H1 (cell line): ENCODE measurements at regions of chr17 and their contacts with region 1.

Region 1: DNA sequence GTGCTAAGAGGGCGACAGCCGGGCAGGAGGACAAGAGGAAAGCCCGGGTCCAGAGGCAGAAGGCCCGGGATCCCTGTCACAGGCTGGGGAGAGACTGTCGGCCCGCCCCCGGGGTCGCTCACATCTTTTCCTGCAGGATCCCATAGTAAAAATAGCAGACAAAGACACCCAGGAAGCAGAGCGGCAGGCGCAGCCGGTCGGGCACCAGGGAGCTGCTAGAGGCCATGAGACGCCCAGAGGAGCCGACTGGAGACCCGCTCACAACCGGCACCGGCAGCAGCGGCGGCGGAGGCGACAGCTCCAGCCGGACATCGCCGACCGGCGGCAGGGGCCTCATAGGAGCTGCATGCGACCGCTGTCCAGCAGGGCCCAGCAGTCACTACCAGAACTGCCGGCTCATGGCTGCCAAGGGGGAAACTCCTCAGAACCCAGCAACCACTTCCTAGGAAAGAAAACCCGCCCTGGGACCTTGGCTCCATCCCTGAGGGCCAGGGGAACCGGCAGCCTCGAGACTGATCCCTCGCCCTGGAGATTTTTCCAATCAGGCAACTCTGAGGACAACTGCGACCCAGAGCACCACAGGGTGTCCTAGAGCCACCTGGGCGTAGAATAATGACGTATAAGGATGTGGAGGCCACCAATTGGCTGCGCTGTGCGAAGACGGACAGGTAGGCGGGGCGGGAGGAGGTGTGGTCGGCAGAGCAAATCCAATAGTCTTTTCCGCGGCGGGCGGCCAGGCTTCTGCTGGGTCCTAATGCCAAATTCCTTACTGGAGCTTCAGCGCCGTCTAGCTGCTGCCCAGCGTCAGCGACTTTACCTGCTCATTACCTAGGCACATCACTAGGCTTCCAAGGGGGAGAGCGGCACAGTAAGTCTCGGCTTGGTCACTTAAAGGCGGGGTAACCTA is at the start of gene SLC35B1:
- DNase-seq: peak; percentile 94 to 97
- H3K4me3 ChIP-seq: peak within 1 kb of the TSS; percentile 76 to 97 (median 90)
- H3K27ac ChIP-seq: peak within 1 kb of the TSS; percentile 100
- H3K4me1 ChIP-seq: peaks cover 2 to 3% (median 3%) of the 10 kb centered on the region in 4 experiments; a peak in 6 of 7 replicates
- H3K27me3 ChIP-seq: no peaks in the 10 kb centered on the region
- CTCF ChIP-seq: peak; percentile 90 to 95 (median 91)
- EP300 ChIP-seq: 0 out of 3 replicates have a peak, but pooled peaks of 1 of the 2 experiments have one; percentile 26
- POLR2A ChIP-seq: peak; percentile 79 to 88
- RAD21 ChIP-seq: peak; percentile 52 to 68
- total RNA-seq, gene SLC35B1: 56.5 and 60.0 TPM in 2 replicates

Region 2: GRCh38 chr17:49508061-49508865 is 199.6 kb before region 1 on chr17:
- CTCF ChIA-PET with region 1: no interaction called
- POLR2A ChIA-PET with region 1: no interaction called
- DNase-seq: peak; percentile 83 to 97
- H3K4me3 ChIP-seq: peak overlapping the region; percentile 22 to 51 (median 34); a peak in 5 of 8 replicates
- H3K27ac ChIP-seq: peak overlapping the region; percentile 58; the same call in 1 of the 2 replicates
- H3K4me1 ChIP-seq: peaks cover 6 to 40% (median 22%) of the 10 kb centered on the region in 4 experiments
- H3K27me3 ChIP-seq: peaks cover 0 to 2% (median 0%) of the 10 kb centered on the region in 4 experiments; a peak in 1 of 7 replicates
- CTCF ChIP-seq: no peak
- EP300 ChIP-seq: no peak
- POLR2A ChIP-seq: peak in 1 of 2 experiments; percentile 48; a peak in 1 of 3 replicates
- RAD21 ChIP-seq: no peak

Region 3: GRCh38 chr17:49567871-49568694 is 139.8 kb before region 1 on chr17:
- CTCF ChIA-PET with region 1: interaction called, 310 read pairs
- POLR2A ChIA-PET with region 1: interaction called, 4 read pairs
- DNase-seq: peak in 1 of 2 experiments; percentile 96
- H3K4me3 ChIP-seq: peak overlapping the region in 2 of 4 experiments; percentile 11 to 51; a peak in 4 of 8 replicates
- H3K27ac ChIP-seq: no peak overlapping the region
- H3K4me1 ChIP-seq: peaks cover 0 to 9% (median 2%) of the 10 kb centered on the region in 4 experiments; a peak in 3 of 7 replicates
- H3K27me3 ChIP-seq: peaks cover 0 to 5% (median 2%) of the 10 kb centered on the region in 4 experiments; a peak in 4 of 7 replicates
- CTCF ChIP-seq: peak; percentile 87 to 98 (median 90)
- EP300 ChIP-seq: no peak
- POLR2A ChIP-seq: no peak
- RAD21 ChIP-seq: peak; percentile 97 to 99

Region 4: DNA sequence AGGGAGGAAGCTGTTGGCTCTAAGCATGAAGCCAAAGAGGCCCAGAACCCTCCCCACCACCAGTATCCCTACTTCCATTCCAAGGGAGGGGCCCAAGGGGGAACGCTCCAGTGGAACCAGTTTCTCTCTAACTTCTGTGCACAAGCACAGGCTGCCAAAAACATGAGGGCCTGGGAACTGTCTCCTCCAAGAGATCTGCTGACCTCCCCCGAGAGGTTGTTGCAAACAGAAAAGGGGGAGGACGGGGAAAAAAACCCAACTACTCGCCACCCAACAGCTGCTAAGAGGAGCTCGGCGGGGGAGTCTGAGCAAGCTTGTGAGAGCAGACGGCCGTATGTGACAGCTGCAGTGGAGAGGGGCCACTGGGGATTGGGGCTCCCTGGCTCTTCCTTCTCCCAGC is 15.6 kb after region 1 on chr17:
- CTCF ChIA-PET with region 1: interaction called, 41 read pairs
- POLR2A ChIA-PET with region 1: interaction called, 5 read pairs
- DNase-seq: no peak
- H3K4me3 ChIP-seq: no peak overlapping the region
- H3K27ac ChIP-seq: no peak overlapping the region
- H3K4me1 ChIP-seq: no peaks in the 10 kb centered on the region
- H3K27me3 ChIP-seq: no peaks in the 10 kb centered on the region
- CTCF ChIP-seq: no peak
- EP300 ChIP-seq: no peak
- POLR2A ChIP-seq: no peak
- RAD21 ChIP-seq: no peak

Region 5: DNA sequence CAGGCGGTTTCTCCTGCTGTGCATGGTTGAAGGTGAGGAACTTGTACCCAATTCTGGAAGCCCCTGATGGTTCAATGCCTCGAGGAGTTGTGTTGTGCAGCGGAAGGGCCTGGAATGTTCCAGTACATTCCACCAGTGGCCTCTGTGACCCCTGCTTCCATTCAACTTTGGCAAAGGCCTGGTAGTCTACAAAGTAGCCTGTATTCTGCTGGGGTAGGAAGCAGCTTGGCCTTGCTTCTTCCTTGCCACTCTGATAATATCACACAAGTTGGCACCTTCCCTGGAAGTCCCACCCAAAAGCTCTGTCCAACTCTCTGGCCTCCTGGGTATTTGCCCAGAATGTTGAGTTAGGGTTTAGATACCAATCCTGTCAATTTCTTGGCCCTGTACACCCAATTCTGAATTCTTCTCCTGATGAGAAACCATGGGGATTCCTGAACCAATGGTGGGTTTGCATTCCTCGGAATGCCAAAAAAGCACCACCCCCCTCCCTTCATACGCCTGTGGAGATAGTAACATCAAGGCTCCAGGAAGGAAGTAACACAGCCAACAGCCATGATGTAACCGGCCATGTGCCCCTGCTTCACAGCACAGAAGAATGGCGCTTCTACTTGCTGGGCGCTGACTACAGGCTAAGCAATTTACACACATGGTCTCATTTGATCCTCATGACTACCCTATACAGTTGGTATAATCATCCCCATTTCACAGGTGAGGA is 67.8 kb after region 1 on chr17:
- CTCF ChIA-PET with region 1: interaction called, 12 read pairs
- POLR2A ChIA-PET with region 1: interaction called, 3 read pairs
- DNase-seq: no peak
- H3K4me3 ChIP-seq: no peak overlapping the region
- H3K27ac ChIP-seq: no peak overlapping the region
- H3K4me1 ChIP-seq: peaks cover 0 to 3% (median 0%) of the 10 kb centered on the region in 4 experiments; a peak in 2 of 7 replicates
- H3K27me3 ChIP-seq: no peaks in the 10 kb centered on the region
- CTCF ChIP-seq: no peak
- EP300 ChIP-seq: no peak
- POLR2A ChIP-seq: no peak
- RAD21 ChIP-seq: no peak

Region 6: GRCh38 chr17:49843774-49844350 is 136.0 kb after region 1 on chr17:
- CTCF ChIA-PET with region 1: interaction called, 14 read pairs
- POLR2A ChIA-PET with region 1: interaction called, 7 read pairs
- DNase-seq: peak in 1 of 2 experiments; percentile 82
- H3K4me3 ChIP-seq: no peak overlapping the region
- H3K27ac ChIP-seq: no peak overlapping the region
- H3K4me1 ChIP-seq: 0 out of 7 replicates have a peak, but pooled peaks cover 0 to 2% (median 0%) of the 10 kb centered on the region in 4 experiments
- H3K27me3 ChIP-seq: no peaks in the 10 kb centered on the region
- CTCF ChIP-seq: peak; percentile 72 to 80 (median 77)
- EP300 ChIP-seq: no peak
- POLR2A ChIP-seq: no peak
- RAD21 ChIP-seq: peak; percentile 64 to 73

Region 7: DNA sequence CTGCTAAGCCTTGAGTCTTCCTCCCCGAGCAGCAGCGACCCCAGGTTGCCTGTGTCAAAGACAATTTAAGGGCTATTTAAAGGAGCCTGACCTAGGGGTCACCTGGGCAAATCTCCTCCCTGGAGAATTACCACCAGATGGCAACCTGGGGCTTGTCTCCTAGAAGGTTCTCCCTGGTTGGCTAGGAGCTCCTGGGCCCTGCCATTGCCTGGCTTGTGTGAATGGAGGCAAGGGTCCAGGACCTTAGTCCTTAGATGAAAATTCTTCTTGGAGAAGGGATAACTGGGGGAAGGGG is 191.3 kb after region 1 on chr17:
- CTCF ChIA-PET with region 1: no interaction called
- POLR2A ChIA-PET with region 1: no interaction called
- DNase-seq: peak in 1 of 2 experiments; percentile 70
- H3K4me3 ChIP-seq: no peak overlapping the region
- H3K27ac ChIP-seq: no peak overlapping the region
- H3K4me1 ChIP-seq: peaks cover 4 to 19% (median 14%) of the 10 kb centered on the region in 4 experiments
- H3K27me3 ChIP-seq: peaks cover 5 to 33% (median 32%) of the 10 kb centered on the region in 4 experiments
- CTCF ChIP-seq: peak; percentile 39 to 80 (median 64)
- EP300 ChIP-seq: no peak
- POLR2A ChIP-seq: no peak
- RAD21 ChIP-seq: peak; percentile 63 to 79